Activated CD4-positive, alpha-beta memory T cell treated with anti-CD3 and anti-CD28 coated beads, Interleukin-2, amount 10 ng/mL, durations not matched to agents 7 days and 5 days (primary cell): ENCODE measurements at regions of chr16 and their contacts with region 1.

Region 1: DNA sequence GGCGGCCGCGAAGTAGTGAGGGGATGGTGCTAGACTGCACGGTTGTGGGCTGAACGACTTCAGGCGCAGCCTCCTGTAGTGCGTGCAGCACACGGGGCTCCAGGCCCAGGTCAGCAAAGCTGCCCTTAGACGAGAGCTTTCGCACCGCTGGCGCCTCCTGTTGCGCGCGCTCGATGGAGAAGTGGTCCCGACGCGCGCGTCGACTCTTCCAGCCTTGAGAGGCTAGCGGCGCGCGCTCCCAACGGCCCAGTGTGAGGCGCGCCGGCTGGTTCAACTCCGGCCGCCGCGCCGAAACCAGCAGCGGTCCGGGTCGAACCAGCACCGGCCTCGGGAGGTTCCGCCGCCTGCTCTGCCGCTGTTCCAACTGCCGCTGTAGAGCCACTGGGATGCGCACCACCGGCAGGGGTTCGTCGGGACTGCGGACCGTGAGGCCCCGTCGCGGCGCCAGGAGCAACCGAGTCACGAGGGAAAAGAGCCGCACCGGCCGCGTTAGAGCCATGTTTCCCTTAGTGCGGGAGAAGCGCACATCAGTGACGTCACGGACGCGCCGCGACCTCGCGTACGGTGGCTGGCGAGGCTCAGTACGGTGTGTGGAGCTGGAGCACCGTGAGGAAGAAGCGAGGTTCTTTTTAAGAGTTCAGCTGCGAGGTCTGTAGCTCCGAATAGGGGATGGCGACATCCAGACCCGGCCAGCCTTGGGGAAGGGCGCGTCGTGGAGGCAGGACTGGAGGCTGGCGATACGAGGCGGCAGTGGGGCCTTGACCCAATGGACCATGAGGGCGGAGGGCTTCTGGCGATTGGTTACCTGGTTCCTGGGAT is at the starts of genes DDX28 and DUS2:
- DNase-seq: peak; percentile 95
- H3K4me3 Mint-ChIP-seq: peak within 1 kb of the TSS; percentile 96
- H3K27ac Mint-ChIP-seq: peak within 1 kb of the TSS; percentile 89
- H3K4me1 Mint-ChIP-seq: peaks cover 35% of the 10 kb centered on the region
- H3K27me3 Mint-ChIP-seq: no peaks in the 10 kb centered on the region
- total RNA-seq, gene DDX28: 11.6 to 12.3 TPM
- total RNA-seq, gene DUS2: 23.8 to 24.4 TPM

Region 2: DNA sequence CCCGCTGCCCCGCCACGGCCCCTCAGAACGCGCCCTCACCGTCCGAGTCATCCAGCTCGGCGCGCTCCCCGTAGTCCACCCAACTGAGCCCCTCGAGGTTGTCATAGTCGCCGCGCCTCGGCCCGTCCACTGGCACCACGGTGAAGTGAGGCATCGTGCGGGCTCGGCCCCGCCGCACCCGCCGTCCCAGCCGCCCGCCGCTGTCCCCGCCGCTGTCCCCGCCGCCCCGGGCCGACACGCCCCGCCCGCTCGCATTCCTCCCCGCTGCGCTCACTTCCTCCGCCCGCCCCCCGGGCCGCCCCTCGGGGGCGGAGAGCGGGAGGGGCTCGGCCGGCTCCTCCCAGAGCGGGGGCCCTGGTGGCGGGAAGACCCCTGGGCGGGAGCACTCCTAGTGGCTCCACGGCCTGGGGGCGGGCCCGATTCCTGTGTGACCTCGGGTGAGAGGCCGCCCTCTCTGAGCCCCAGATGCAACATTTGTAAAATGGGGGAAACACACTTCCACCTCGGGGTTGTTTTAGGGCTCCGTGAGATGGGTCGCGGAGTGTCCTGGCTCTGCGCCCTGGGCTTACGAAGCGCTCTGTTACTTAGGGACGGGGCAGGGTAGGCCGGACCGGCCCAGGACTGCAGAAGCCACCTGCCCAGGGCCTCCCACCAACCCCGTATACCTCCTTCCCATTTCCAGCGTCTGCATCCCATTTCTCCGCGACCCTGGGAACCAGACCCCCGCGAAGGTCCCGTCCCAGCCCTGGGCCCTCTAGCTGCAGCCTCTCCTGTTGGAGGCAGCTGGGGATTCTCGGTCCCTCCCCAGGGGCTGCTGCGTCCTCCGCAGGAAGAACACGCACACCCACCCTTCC is 54.3 kb before region 1 on chr16 and contains the start of gene SLC12A4:
- CTCF ChIA-PET with region 1: no interaction called
- POLR2A ChIA-PET with region 1: interaction called, 13 read pairs
- DNase-seq: peak; percentile 89
- H3K4me3 Mint-ChIP-seq: peak within 1 kb of the TSS; percentile 100
- H3K27ac Mint-ChIP-seq: peak within 1 kb of the TSS; percentile 95
- H3K4me1 Mint-ChIP-seq: peaks cover 26% of the 10 kb centered on the region
- H3K27me3 Mint-ChIP-seq: no peaks in the 10 kb centered on the region
- total RNA-seq, gene SLC12A4: 37.9 to 40.0 TPM

Region 3: DNA sequence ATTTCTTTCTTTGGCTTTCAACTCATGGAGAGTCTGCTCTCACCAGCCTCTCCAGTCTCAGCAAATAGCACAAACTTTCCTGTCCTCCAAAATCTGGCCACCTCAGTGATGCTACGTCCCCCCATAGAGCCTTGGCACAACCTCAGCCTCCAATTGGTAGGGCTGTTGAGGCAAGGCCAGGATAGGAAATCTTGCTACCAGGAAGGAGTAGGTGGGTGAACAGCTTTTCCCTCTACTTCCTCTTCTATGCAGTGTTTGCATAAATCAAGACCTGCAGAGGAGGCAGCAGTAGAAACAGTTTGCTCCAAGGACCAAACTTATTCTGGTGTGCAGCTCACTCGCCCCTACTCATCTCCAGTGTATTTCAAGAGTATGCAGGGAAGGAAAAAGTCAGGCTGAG is 22.9 kb before region 1 on chr16:
- CTCF ChIA-PET with region 1: interaction called, 16 read pairs
- POLR2A ChIA-PET with region 1: interaction called, 36 read pairs
- DNase-seq: no peak
- H3K4me3 Mint-ChIP-seq: peak overlapping the region; percentile 69
- H3K27ac Mint-ChIP-seq: peak overlapping the region; percentile 89
- H3K4me1 Mint-ChIP-seq: peaks cover 49% of the 10 kb centered on the region
- H3K27me3 Mint-ChIP-seq: no peaks in the 10 kb centered on the region

Region 4: DNA sequence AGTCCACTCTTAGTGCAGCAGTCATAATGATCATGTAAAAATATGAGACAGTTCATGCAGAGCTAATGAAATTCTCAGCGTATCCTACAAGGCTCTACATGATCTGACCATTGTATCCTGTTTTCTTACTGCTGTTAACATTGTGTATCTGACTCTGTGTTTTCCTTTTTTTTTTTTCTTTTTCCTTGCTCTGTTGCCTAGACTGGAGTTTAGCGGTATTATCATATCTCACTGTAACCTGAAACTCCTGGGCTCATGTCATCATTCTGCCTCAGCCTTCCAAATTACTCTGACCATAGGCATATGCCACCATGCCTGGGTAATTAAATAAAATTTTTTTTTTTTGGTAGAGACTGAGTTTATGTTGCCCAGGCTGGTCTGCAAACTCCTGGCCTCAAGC is 12.3 kb after region 1 on chr16:
- CTCF ChIA-PET with region 1: interaction called, 16 read pairs
- POLR2A ChIA-PET with region 1: interaction called, 16 read pairs
- DNase-seq: no peak
- H3K4me3 Mint-ChIP-seq: no peak overlapping the region
- H3K27ac Mint-ChIP-seq: peak overlapping the region; percentile 15
- H3K4me1 Mint-ChIP-seq: peaks cover 48% of the 10 kb centered on the region
- H3K27me3 Mint-ChIP-seq: no peaks in the 10 kb centered on the region

Region 5: GRCh38 chr16:68055395-68055794 is 32.5 kb after region 1 on chr16:
- CTCF ChIA-PET with region 1: no interaction called
- POLR2A ChIA-PET with region 1: no interaction called
- DNase-seq: no peak
- H3K4me3 Mint-ChIP-seq: no peak overlapping the region
- H3K27ac Mint-ChIP-seq: no peak overlapping the region
- H3K4me1 Mint-ChIP-seq: peaks cover 24% of the 10 kb centered on the region
- H3K27me3 Mint-ChIP-seq: no peaks in the 10 kb centered on the region

Region 6: GRCh38 chr16:68074850-68075555 is 52.1 kb after region 1 on chr16:
- CTCF ChIA-PET with region 1: no interaction called
- POLR2A ChIA-PET with region 1: interaction called, 18 read pairs
- DNase-seq: peak; percentile 94
- H3K4me3 Mint-ChIP-seq: peak overlapping the region; percentile 58
- H3K27ac Mint-ChIP-seq: peak overlapping the region; percentile 95
- H3K4me1 Mint-ChIP-seq: peaks cover 89% of the 10 kb centered on the region
- H3K27me3 Mint-ChIP-seq: no peaks in the 10 kb centered on the region